Calu3 (cell line): ENCODE measurements at regions of chr3 and their contacts with region 1.

Region 1: DNA sequence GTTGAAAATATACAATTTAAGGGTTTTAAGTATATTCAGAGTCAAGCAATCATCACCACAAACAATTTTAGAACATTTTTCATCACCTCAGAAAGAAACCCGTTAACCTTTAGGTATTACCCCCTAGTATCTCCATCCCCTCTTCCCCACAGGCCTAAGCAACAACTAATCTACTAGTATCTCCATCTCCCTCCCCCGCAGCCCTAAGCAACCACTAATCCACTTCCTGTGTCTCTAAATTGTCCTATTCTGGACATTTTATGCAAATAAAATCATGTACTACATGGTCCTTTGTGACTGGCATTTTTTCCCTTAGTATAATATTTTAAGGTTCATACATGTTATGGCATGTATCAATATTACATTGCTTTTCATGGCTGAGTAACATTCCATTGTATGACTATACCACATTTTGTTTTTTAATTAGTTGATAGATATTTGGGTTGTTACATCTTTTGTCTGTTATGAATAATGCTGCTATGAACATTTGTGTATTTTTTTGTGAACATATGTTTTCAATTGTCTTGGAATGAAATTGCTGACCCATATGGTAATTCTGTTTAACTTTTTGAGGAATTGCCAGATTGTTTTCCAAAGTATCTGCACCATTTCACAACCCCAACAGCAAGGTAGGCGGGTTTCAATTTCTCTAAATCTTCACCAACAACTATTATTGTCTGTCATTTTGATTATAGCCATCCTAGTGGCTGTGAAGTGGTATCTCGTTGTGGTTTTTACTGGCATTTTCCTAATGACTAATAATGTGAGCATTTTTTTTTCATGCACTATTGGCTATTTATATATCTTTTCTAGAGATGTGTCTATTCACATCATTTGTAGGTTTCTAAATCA is 215.6 kb upstream of the CD96 start:
- DNase-seq: no peak
- H3K4me3 Mint-ChIP-seq: no peak overlapping the region
- H3K27ac Mint-ChIP-seq: no peak overlapping the region
- H3K4me1 Mint-ChIP-seq: peaks cover 23% of the 10 kb centered on the region
- H3K27me3 Mint-ChIP-seq: no peaks in the 10 kb centered on the region
- CTCF ChIP-seq: no peak

Region 2: DNA sequence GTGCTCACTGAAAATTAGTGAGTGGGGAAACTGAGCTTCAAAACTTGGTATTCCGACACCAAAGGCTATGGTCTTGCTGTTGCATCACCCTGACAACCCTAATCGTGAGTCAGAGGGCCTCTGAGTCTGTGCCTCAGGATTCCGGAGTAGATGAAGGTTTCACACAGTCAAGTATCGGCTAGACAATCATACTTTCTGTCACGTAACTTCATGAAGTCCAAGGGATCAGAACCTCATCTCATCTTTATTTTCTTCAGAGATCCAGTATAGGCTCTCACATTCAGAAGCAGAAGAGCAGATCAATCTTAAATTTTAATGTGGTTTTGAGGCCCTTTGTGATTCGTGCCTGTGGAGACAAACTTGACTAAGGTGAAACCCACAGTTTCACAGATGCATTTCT is 280.8 kb before region 1 on chr3:
- CTCF ChIA-PET with region 1: no interaction called
- intact Hi-C with region 1: no loop called
- DNase-seq: no peak
- H3K4me3 Mint-ChIP-seq: no peak overlapping the region
- H3K27ac Mint-ChIP-seq: no peak overlapping the region
- H3K4me1 Mint-ChIP-seq: no peaks in the 10 kb centered on the region
- H3K27me3 Mint-ChIP-seq: no peaks in the 10 kb centered on the region
- CTCF ChIP-seq: no peak

Region 3: GRCh38 chr3:111277226-111277625 is 49.1 kb before region 1 on chr3:
- CTCF ChIA-PET with region 1: no interaction called
- intact Hi-C with region 1: loop called (anchors 2 kb)
- DNase-seq: no peak
- H3K4me3 Mint-ChIP-seq: no peak overlapping the region
- H3K27ac Mint-ChIP-seq: no peak overlapping the region
- H3K4me1 Mint-ChIP-seq: peaks cover 9% of the 10 kb centered on the region
- H3K27me3 Mint-ChIP-seq: no peaks in the 10 kb centered on the region
- CTCF ChIP-seq: no peak

Region 4: GRCh38 chr3:111369953-111370352 is 43.6 kb after region 1 on chr3:
- CTCF ChIA-PET with region 1: no interaction called
- intact Hi-C with region 1: no loop called
- DNase-seq: no peak
- H3K4me3 Mint-ChIP-seq: no peak overlapping the region
- H3K27ac Mint-ChIP-seq: peak overlapping the region; percentile 31
- H3K4me1 Mint-ChIP-seq: peaks cover 10% of the 10 kb centered on the region
- H3K27me3 Mint-ChIP-seq: no peaks in the 10 kb centered on the region
- CTCF ChIP-seq: no peak